Esophagus squamous epithelium (tissue), 5 donors: ENCODE measurements at regions of chr10 and their contacts with region 1.

Region 1: GRCh38 chr10:30231071-30231652 is 117.9 kb downstream of the MTPAP start:
- DNase-seq: no peak
- H3K4me3 ChIP-seq: no peak overlapping the region
- H3K27ac ChIP-seq: no peak overlapping the region
- H3K4me1 ChIP-seq: peaks cover 0 to 14% (median 5%) of the 10 kb centered on the region in 3 donors
- H3K27me3 ChIP-seq: no peaks in the 10 kb centered on the region
- CTCF ChIP-seq: no peak
- POLR2A ChIP-seq: no peak

Region 2: GRCh38 chr10:29998142-29998808 is 232.9 kb before region 1 on chr10:
- intact Hi-C with region 1: loop called (anchors 10 kb)
- DNase-seq: no peak
- H3K4me3 ChIP-seq: no peak overlapping the region
- H3K27ac ChIP-seq: no peak overlapping the region
- H3K4me1 ChIP-seq: peaks cover 5 to 59% (median 22%) of the 10 kb centered on the region in 3 donors
- H3K27me3 ChIP-seq: no peaks in the 10 kb centered on the region
- CTCF ChIP-seq: peak; percentile 70 to 97 (median 95)
- POLR2A ChIP-seq: no peak

Region 3: DNA sequence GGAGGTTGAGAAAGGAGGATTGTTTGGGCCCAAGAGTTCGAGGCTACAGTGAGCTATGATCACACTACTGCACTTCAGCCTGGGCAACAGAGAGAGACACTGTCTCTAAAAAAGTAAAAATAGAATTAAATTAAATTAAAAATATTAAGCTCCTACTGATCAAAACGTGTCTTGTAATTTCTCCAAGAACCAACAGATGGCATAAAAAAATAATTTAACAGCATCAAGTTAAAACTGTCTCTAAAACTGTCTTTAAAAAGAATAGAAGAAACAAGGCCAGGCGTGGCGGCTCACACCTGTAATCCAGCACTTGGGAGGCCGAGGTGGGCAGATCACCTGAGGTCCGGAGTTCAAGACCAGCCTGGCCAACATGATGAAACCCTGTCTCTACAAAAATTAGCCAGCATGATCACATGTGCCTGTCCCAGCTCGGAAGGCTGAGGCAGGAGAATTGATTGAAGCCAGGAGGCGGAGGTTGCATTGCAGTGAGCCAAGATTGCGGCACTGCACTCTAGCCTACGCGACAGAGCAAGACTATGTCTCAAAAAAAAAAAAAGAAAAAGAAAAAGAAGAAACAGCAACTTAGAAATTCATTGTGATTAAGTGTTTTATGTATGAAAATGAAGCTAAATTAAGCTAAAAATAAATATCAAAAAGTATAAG is 93.4 kb after region 1 on chr10:
- intact Hi-C with region 1: no loop called
- DNase-seq: no peak
- H3K4me3 ChIP-seq: no peak overlapping the region
- H3K27ac ChIP-seq: no peak overlapping the region
- H3K4me1 ChIP-seq: no peaks in the 10 kb centered on the region
- H3K27me3 ChIP-seq: no peaks in the 10 kb centered on the region
- CTCF ChIP-seq: no peak
- POLR2A ChIP-seq: no peak

Region 4: DNA sequence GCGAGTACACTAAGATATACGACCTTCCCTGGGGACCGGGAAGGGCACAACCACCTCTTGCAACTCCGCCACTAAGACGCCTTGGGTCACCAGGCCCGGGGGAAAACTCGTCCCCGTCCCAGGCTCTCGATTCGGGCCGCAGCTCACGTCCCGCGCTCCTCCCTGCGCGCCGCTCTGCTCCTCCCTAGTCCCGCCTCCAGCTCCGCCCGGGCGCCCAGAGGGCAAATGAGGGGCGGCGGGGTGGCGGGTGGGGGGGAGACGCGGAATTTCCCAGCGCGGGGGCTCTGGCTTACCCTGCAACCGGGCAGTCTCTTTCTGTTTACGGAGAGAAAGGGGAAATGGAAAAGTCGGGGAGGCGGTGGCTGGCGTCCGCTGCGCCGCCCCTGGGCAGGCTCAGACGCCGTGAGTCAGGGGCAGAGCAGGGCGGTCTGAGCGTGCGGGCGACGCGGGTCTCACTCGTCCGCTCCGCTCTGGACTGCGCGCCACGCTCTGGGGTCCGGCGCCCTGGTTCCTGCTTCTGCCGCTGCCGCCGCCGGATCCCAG is 202.6 kb after region 1 on chr10 and contains the start of gene MAP3K8:
- intact Hi-C with region 1: no loop called
- DNase-seq: peak; percentile 64
- H3K4me3 ChIP-seq: peak within 1 kb of the TSS; percentile 76 to 96 (median 90)
- H3K27ac ChIP-seq: peak within 1 kb of the TSS; percentile 98 to 100 (median 99)
- H3K4me1 ChIP-seq: peaks cover 26 to 66% (median 34%) of the 10 kb centered on the region in 3 donors
- H3K27me3 ChIP-seq: no peaks in the 10 kb centered on the region
- CTCF ChIP-seq: no peak
- POLR2A ChIP-seq: peak in 3 of 4 donors; percentile 37 to 91 (median 69)
- total RNA-seq, gene MAP3K8: 9.4 to 20.6 (median 17.9) TPM